AG04450 (cell line): ENCODE measurements at regions of chr19 and their contacts with region 1.

Region 1: DNA sequence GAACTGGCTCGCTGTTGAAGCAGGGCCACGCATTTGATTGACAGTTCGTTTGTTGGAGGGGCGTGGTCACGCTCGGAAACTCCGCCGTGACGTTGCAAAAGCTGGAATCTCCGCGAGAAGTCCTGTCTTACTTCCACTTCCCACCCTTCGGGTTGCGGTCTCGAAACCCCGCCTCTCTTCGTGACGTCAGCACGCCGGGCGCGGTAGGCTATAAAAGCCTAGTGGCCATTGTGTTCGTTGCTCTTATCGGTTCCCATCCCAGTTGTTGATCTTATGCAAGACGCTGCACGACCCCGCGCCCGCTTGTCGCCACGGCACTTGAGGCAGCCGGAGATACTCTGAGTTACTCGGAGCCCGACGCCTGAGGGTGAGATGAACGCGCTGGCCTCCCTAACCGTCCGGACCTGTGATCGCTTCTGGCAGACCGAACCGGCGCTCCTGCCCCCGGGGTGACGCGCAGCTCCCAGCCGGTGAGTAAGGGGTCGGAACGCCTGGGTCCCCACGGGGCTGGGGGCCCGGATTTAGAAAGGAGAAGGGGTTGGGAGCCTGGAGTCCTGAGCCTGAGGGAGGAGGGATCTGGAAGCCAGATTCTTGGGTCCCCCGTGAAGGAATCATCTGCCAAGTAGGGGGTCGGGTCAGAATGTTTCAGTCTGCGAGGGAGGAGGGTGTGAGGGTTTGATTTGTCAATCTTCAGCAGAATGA is at the start of gene PPP1R15A:
- DNase-seq: peak; percentile 96
- H3K4me3 ChIP-seq: peak within 1 kb of the TSS; percentile 99
- H3K27ac ChIP-seq: peak within 1 kb of the TSS; percentile 100
- H3K27me3 ChIP-seq: no peaks in the 10 kb centered on the region
- CTCF ChIP-seq: no peak
- polyA plus RNA-seq, gene PPP1R15A: 36.5 and 37.2 TPM in 2 replicates

Region 2: DNA sequence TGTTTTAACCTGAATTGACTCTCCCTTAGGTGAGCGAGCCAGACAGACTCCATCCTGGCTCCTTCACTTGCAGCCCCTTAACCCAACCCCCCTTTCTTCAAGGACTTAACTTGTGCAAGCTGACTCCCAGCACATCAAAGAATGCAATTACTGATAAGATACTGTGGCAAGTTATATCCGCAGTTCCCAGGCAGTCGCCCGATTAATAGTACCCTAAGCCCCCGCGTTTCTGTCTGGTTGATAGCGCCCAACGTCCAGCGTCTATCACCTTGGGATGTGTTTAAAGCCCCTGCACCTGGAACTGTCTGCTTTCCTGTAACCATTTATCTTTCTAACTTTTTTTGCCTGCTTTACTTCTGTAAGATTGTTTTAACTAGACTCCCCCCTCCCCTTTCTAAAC is 42.2 kb before region 1 on chr19:
- CTCF ChIA-PET with region 1: no interaction called
- POLR2A ChIA-PET with region 1: no interaction called
- DNase-seq: no peak
- H3K4me3 ChIP-seq: no peak overlapping the region
- H3K27ac ChIP-seq: no peak overlapping the region
- H3K27me3 ChIP-seq: no peaks in the 10 kb centered on the region
- CTCF ChIP-seq: no peak

Region 3: DNA sequence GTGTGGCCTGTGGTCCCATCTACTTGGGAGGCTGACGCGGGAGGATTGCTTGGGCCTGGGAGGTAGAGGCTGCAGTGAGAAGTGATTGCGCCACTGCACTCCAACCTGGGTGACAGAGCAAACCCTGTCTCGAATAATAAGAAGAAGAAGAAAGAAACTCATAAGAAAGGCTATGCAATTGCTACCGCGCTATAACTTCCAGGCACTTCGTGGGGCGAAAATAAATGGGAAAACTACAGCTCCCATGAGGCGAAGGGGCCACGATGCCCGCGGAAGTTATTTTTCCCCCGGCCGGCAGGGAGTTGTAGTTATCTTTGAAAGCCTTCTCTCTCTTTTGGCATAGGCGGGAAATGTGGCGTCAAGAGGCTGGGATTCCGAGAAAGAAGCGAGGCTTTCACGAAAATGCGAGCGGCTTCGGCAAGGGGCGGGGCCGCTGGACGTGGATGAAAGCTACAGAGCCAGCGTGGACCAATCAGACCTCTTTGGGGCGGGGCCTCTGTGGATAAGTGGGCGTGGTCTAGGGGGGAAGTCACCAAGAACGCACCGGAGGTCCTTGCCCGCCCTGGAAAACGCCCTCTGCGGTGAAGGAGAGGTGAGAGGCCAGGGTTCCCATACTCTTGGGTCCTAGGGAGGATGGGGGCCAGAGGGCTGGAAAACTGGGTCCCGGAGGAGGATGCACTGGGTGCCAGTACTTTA is 27.6 kb after region 1 on chr19 and contains the start of gene NUCB1:
- CTCF ChIA-PET with region 1: no interaction called
- POLR2A ChIA-PET with region 1: interaction called, 19 read pairs
- DNase-seq: peak; percentile 96
- H3K4me3 ChIP-seq: peak within 1 kb of the TSS; percentile 94
- H3K27ac ChIP-seq: peak within 1 kb of the TSS; percentile 84
- H3K27me3 ChIP-seq: no peaks in the 10 kb centered on the region
- CTCF ChIP-seq: peak; percentile 45
- polyA plus RNA-seq, gene NUCB1: 123 and 130 TPM in 2 replicates

Region 4: GRCh38 chr19:48946463-48947257 is 74.3 kb after region 1 on chr19:
- CTCF ChIA-PET with region 1: no interaction called
- POLR2A ChIA-PET with region 1: no interaction called
- DNase-seq: no peak
- H3K4me3 ChIP-seq: no peak overlapping the region
- H3K27ac ChIP-seq: no peak overlapping the region
- H3K27me3 ChIP-seq: no peaks in the 10 kb centered on the region
- CTCF ChIP-seq: no peak